ENCODE measurements at regions of chr12 and their contacts with region 1.

Region 1: GRCh38 chr12:123232807-123233543 is at the starts of genes MPHOSPH9 and MTRFR:
- DNase-seq: peak; percentile 100
- H3K4me3 Mint-ChIP-seq: peak within 1 kb of the TSS; percentile 99
- H3K27ac Mint-ChIP-seq: peak within 1 kb of the TSS; percentile 96
- H3K4me1 Mint-ChIP-seq: peaks cover 60% of the 10 kb centered on the region
- H3K27me3 Mint-ChIP-seq: peaks cover 3% of the 10 kb centered on the region
- total RNA-seq, gene MPHOSPH9: 88.8 to 97.6 TPM
- total RNA-seq, gene MTRFR: 28.4 to 28.8 TPM

Region 2: GRCh38 chr12:122526683-122527477 is 706.1 kb before region 1 on chr12 and contains the starts of genes KNTC1 and RSRC2:
- CTCF ChIA-PET with region 1: no interaction called
- POLR2A ChIA-PET with region 1: interaction called, 4 read pairs
- intact Hi-C with region 1: loop called (anchors 1 kb)
- DNase-seq: peak; percentile 99
- H3K4me3 Mint-ChIP-seq: no peak within 1 kb of the TSS
- H3K27ac Mint-ChIP-seq: no peak within 1 kb of the TSS
- H3K4me1 Mint-ChIP-seq: peaks cover 36% of the 10 kb centered on the region
- H3K27me3 Mint-ChIP-seq: no peaks in the 10 kb centered on the region
- total RNA-seq, gene KNTC1: 136 to 147 TPM
- total RNA-seq, gene RSRC2: 106 to 115 TPM

Region 3: GRCh38 chr12:122921917-122922316 is 311.1 kb before region 1 on chr12:
- CTCF ChIA-PET with region 1: no interaction called
- POLR2A ChIA-PET with region 1: no interaction called
- intact Hi-C with region 1: no loop called
- DNase-seq: no peak
- H3K4me3 Mint-ChIP-seq: no peak overlapping the region
- H3K27ac Mint-ChIP-seq: no peak overlapping the region
- H3K4me1 Mint-ChIP-seq: no peaks in the 10 kb centered on the region
- H3K27me3 Mint-ChIP-seq: no peaks in the 10 kb centered on the region

Region 4: DNA sequence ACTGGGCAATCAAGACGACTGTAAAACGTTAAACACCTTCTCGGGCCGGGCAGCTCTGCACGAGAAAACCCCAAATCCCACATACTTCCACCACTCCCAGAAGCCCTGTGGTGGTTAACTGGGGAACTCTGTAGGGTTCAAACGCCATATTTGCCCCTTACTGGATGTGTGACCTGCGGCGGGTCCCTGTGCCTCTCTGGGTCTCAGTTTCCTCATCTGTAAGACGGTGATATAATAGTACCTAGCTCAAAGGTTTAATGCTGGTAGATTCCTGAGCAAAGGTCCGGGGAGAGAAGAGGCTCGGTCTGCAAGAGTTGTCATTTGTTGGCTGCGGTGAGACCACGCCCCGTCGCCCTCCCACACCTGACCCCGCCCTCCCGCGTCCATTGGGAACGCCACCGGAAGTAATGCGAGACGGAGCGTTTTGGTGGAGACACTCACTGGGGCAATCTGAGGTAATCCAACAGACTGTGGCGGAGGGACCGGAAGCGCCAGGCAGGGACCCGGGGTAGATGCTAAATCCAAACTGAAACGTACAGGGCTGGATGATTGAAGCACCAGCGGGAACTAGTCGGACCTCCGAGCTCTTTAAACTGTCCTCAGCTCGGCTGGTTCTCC is 258.6 kb before region 1 on chr12:
- CTCF ChIA-PET with region 1: interaction called, 13 read pairs
- POLR2A ChIA-PET with region 1: interaction called, 8 read pairs
- intact Hi-C with region 1: loop called (anchors 2 kb)
- DNase-seq: peak; percentile 100
- H3K4me3 Mint-ChIP-seq: peak overlapping the region; percentile 98
- H3K27ac Mint-ChIP-seq: peak overlapping the region; percentile 99
- H3K4me1 Mint-ChIP-seq: peaks cover 25% of the 10 kb centered on the region
- H3K27me3 Mint-ChIP-seq: no peaks in the 10 kb centered on the region

Region 5: GRCh38 chr12:123075646-123076171 is 157.3 kb before region 1 on chr12:
- CTCF ChIA-PET with region 1: interaction called, 9 read pairs
- POLR2A ChIA-PET with region 1: interaction called, 6 read pairs
- intact Hi-C with region 1: loop called (anchors 1 kb)
- DNase-seq: peak; percentile 88
- H3K4me3 Mint-ChIP-seq: peak overlapping the region; percentile 68
- H3K27ac Mint-ChIP-seq: peak overlapping the region; percentile 95
- H3K4me1 Mint-ChIP-seq: peaks cover 41% of the 10 kb centered on the region
- H3K27me3 Mint-ChIP-seq: no peaks in the 10 kb centered on the region

Region 6: DNA sequence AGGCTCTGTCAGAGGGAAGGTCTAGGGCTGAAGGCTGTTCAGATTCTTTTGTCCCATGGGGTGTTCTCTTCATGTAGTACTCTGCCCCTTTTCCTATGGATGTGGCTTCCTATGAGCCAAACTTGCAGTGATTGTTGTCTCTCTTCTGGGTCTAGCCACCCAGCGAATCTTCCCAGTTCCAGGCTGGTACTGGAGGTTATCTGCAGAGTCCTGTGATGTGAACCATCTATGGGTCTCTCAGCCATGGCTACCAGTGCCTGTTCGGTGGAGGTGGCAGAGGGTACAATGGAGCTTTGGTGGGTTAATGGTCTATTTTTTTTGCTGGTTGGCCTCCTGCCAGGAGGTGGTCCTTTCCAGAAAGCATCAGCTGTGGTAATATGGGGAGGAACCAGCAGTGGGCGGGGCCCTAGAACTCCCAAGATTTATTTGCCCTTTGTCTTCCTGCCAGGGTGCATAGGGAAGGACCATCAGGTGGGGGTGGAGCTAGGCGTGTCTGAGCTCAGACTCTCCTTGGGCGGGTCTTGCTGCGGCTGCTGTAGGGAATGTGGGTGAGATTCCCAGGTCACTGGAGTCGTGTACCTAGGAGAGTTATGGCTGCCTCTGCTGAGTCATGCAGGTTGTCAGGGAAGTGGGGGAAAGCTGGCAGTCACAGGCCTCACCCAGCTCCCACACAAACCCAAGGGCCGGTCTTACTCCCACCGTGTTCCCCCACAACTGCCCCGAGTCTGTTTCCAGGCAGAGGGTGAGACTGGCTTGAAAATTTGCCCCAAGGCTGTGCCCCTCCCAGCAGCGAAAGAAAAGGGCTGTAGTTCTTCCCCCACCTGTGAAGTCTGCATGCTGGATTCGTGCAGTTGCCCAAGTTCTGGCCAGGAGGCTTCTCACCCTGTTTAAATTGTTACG is 17.8 kb after region 1 on chr12:
- CTCF ChIA-PET with region 1: interaction called, 17 read pairs
- POLR2A ChIA-PET with region 1: interaction called, 4 read pairs
- intact Hi-C with region 1: no loop called
- DNase-seq: no peak
- H3K4me3 Mint-ChIP-seq: no peak overlapping the region
- H3K27ac Mint-ChIP-seq: peak overlapping the region; percentile 31
- H3K4me1 Mint-ChIP-seq: peaks cover 61% of the 10 kb centered on the region
- H3K27me3 Mint-ChIP-seq: no peaks in the 10 kb centered on the region

Region 7: DNA sequence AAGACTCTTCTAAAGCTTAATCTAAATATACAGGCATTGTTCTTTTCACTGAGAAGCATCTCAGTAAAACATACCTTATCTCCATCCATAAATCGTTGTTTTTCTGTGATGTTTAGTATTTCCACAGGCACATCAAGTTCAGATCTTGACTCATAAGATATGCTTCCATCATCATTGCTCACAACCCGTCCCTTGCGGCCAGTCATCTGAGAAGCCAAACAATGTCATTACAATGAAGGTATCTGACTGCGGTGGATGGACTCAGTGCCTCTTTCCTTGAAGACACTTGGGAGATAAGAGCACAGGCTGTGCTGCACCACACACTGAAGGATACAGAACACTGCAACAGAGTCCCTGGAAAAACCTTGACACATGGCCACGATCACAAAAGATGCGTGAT is 86.9 kb after region 1 on chr12:
- CTCF ChIA-PET with region 1: no interaction called
- POLR2A ChIA-PET with region 1: no interaction called
- intact Hi-C with region 1: no loop called
- DNase-seq: no peak
- H3K4me3 Mint-ChIP-seq: no peak overlapping the region
- H3K27ac Mint-ChIP-seq: no peak overlapping the region
- H3K4me1 Mint-ChIP-seq: no peaks in the 10 kb centered on the region
- H3K27me3 Mint-ChIP-seq: no peaks in the 10 kb centered on the region

Region 8: DNA sequence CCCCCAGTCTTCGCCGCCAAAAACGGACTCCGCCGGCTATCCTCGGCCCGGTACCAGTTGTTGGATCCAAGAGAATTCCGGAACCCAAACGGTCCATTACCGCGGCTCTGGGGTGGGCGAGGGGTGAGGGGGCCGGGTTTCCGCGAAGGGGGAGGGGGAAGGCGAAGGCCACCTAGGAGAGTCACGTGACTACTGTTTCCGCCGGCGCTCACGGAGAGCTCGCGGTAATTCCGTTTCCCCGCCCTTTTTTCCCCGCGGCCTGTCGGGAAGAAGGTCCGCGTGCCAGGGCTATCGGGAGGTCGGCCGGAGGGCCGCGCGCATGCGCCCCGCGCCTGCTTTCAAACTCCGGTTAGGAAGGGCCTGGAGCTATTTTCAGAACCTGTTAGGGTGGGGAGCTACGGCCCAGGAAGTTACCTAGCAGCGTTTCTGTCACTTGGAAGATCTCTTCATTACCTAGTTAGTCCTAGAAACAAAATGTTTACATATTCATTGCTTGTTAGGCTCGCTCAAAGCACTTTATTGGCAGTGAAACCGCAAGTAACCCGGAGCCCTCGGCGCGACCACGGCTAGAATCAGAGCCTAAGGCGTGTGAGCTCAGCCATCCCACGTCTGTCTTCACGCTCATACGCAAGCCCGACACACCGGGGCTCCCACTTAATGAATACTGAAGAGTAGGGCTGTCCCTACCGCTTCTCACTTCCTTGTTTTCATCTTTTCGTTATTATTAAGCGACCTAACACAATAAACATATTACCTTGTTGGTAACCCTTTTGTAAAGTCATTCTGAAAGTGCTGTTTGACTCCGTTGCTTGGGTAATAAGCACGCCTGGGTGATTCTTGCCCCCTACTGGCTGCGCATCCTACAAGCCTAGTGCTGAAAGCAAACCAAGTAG is 132.3 kb after region 1 on chr12:
- CTCF ChIA-PET with region 1: interaction called, 7 read pairs
- POLR2A ChIA-PET with region 1: interaction called, 12 read pairs
- intact Hi-C with region 1: loop called (anchors 1 kb)
- DNase-seq: peak; percentile 99
- H3K4me3 Mint-ChIP-seq: peak overlapping the region; percentile 88
- H3K27ac Mint-ChIP-seq: peak overlapping the region; percentile 99
- H3K4me1 Mint-ChIP-seq: peaks cover 11% of the 10 kb centered on the region
- H3K27me3 Mint-ChIP-seq: no peaks in the 10 kb centered on the region

Region 9: DNA sequence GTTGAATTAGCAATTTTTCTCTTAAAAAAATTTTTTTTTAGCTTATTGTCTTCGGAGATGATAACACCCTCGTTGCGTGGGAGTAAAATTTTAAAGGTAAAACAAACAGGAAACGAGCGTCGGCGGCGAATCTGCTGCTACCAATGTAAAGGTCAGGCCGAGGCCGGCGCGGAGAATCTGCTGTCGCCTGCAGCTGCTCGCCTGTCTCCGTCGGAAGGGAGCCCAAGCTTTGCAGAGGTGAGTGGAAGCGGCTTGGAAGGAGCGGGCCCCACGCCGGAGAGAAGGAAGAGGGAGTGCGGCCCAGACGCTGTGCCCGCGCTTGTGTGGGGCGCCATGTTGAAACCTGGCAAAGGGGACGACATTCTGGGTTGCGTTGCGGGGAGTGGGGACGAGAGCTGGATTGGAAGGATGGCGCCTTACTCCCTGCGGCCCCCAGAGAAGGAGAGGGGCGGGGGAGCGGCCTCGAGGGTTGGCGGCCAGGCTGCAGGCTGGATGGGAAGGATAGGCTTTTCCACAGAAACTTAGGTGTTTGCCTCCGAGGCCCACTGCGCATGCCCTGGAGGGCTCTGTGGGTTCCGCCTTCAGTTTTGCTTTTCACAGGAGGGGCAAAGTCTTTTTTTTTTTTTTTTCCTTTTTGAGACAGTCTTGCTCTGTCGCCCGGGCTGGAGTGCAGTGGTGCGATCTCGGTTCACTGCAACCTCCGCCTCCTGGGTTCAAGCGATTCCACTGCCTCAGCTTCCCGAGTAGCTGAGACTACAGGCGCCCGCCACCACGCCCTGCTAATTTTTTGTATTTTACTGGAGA is 225.2 kb after region 1 on chr12 and contains the start of gene SNRNP35:
- CTCF ChIA-PET with region 1: no interaction called
- POLR2A ChIA-PET with region 1: no interaction called
- intact Hi-C with region 1: loop called (anchors 10 kb)
- DNase-seq: peak; percentile 88
- H3K4me3 Mint-ChIP-seq: peak within 1 kb of the TSS; percentile 97
- H3K27ac Mint-ChIP-seq: peak within 1 kb of the TSS; percentile 99
- H3K4me1 Mint-ChIP-seq: peaks cover 23% of the 10 kb centered on the region
- H3K27me3 Mint-ChIP-seq: no peaks in the 10 kb centered on the region
- total RNA-seq, gene SNRNP35: 28.6 to 30.6 TPM